Activated T-helper 2 cell treated with anti-CD3 and anti-CD28 coated beads, Interferon-gamma antibody, Interleukin-2, Interleukin-4, amounts not matched to agents 10 μg/mL and 5 μg/mL and 100 μg/mL, durations not matched to agents 14 hours and 24 hours and 36 hours (primary cell): ENCODE measurements at regions of chr16 and their contacts with region 1.

Region 1: DNA sequence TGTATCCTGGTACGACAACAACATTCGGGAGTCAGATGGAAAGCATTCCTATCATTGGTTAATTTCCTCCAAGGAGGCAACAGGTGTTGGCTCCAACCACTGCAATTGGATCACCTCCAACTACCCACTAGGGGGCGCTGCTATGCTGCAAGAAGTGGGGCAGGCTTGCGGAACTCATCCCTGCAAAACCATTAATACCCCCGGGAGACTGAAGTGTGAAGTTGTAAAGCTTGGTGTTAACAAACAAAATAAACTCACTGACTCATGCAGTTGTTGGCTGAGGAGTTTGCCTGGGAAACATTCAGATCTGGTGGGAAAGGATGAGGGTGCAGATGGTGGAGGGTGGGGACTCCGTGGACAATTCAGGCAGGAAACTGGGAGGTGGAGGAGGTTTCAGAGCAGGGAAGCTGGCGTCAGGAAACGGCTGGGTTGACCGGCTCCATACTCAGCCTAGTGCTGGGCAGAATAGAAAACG is 84.9 kb downstream of the HS3ST2 start:
- DNase-seq: peak; percentile 31
- H3K4me3 Mint-ChIP-seq: no peak overlapping the region
- H3K27ac Mint-ChIP-seq: no peak overlapping the region
- H3K4me1 Mint-ChIP-seq: no peaks in the 10 kb centered on the region
- H3K27me3 Mint-ChIP-seq: peaks cover 16% of the 10 kb centered on the region

Region 2: GRCh38 chr16:22857296-22858025 is 41.5 kb before region 1 on chr16:
- intact Hi-C with region 1: no loop called
- DNase-seq: no peak
- H3K4me3 Mint-ChIP-seq: no peak overlapping the region
- H3K27ac Mint-ChIP-seq: no peak overlapping the region
- H3K4me1 Mint-ChIP-seq: no peaks in the 10 kb centered on the region
- H3K27me3 Mint-ChIP-seq: no peaks in the 10 kb centered on the region

Region 3: DNA sequence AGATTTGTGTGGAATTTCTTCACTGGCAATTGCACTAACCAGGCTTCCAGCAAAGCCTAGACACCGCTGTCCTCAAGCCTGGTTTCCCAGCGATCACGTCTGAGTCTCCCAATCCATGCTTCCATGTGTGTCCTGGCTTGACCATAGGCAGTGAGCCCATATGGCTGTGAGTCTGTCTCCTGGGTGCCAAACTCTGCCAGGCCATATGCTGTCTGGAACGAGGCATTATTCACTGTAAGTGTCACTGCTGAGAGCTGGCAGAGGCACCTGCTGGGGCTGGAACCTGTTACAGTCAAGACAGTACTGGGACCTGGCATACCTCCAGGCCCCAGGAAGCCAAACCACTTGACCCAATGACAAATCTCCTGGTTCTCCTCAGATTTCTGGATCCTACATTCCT is 24.5 kb before region 1 on chr16:
- intact Hi-C with region 1: no loop called
- DNase-seq: no peak
- H3K4me3 Mint-ChIP-seq: no peak overlapping the region
- H3K27ac Mint-ChIP-seq: no peak overlapping the region
- H3K4me1 Mint-ChIP-seq: no peaks in the 10 kb centered on the region
- H3K27me3 Mint-ChIP-seq: no peaks in the 10 kb centered on the region

Region 4: DNA sequence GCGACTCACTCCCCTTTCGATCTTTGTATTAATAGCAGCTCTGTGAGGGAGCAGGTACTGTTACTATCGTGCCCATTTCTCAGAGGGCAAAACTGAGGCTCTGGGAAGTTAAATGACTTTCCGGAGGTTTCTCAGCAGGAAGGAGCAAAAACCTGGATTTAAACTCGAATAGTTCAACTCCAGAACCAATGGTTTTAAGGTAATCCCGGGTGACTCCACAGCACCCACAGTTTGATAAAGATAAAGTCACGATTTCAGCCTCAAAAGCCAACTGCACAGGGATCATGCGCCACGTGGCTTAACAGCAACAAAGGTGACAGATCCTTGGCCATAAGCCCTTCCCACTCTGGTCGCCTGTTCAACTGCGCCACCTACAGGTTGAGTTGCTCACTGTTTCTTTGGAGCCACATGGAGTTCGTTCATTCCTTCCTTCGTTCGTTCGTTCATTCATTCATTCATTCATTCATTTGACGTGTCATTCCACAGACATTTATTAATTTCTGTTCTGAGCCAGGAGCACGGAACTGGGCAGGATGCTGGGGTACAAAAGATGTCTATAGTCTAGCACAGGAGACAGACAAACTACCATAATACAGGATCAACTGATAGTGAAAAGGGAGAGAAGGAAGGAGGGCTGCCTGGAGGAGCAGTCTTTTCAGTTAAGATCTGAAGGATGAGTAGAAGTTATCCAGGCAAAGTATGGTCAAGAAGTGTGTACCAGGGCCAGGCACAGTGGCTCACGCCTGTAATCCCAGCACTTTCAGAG is 49.9 kb after region 1 on chr16:
- intact Hi-C with region 1: loop called (anchors 2 kb)
- DNase-seq: peak; percentile 50
- H3K4me3 Mint-ChIP-seq: peak overlapping the region; percentile 15
- H3K27ac Mint-ChIP-seq: no peak overlapping the region
- H3K4me1 Mint-ChIP-seq: peaks cover 8% of the 10 kb centered on the region
- H3K27me3 Mint-ChIP-seq: peaks cover 37% of the 10 kb centered on the region

Region 5: DNA sequence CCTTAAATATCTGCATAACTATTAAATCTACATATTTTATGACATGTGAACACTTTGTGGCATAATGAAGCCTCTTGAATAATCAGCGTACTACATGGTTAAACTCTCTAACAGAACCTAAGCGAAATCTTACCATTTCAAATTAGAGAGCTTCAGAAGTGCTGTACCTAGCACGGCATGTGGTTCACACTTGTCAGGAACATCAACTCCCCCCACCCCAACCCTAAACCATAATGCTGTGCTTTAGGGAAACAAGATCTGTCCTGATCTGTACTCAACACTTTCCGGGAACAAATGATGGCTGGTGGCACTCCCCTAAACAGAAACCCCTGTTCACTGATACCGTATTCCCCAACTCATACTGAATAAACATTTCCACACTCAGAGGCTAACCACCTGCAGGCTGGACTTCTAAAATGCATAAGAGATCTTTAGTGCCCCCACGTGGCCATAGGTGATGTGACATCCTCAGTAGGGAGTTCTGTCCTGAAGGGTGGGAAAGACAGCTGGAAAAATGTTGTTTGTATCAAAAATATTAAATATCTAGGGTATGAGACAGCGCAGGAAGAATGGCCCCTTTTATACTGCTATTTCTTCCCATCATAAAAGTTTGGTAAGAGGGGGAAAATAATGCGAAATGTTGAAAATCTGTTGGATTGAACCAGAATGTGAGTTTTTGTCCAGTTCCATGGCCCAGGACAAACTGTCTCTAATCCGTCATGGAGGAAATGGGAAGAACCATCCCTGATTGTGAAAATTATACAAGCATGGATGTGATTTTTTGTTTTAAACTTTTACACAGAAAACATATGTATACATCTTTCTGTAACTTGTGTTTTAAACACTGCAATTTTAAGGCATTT is 161.8 kb after region 1 on chr16:
- intact Hi-C with region 1: loop called (anchors 2 kb)
- DNase-seq: no peak
- H3K4me3 Mint-ChIP-seq: no peak overlapping the region
- H3K27ac Mint-ChIP-seq: no peak overlapping the region
- H3K4me1 Mint-ChIP-seq: peaks cover 2% of the 10 kb centered on the region
- H3K27me3 Mint-ChIP-seq: peaks cover 16% of the 10 kb centered on the region

Region 6: DNA sequence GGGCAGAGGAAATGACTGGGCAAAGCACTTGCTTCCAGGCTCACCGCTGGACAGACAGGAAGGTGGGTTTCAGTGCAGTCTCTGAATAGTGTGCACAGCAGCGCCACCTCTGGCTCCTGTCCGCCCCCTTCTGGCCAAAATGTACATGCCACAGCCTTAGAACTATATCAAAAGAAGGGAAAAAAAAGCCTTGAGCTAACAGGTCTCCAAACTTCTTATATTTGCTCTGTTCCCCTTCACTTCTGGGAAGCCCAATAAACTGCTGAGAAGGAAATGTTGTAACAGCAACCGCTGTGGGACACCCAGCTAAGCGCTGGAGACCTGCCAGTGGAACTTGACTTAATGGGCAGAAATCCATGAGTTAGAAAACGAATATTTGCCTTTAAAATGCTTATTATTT is 536.6 kb after region 1 on chr16:
- intact Hi-C with region 1: loop called (anchors 2 kb)
- DNase-seq: peak; percentile 45
- H3K4me3 Mint-ChIP-seq: no peak overlapping the region
- H3K27ac Mint-ChIP-seq: no peak overlapping the region
- H3K4me1 Mint-ChIP-seq: peaks cover 3% of the 10 kb centered on the region
- H3K27me3 Mint-ChIP-seq: no peaks in the 10 kb centered on the region